ENCODE measurements at regions of chr9 and their contacts with region 1.

Region 1: DNA sequence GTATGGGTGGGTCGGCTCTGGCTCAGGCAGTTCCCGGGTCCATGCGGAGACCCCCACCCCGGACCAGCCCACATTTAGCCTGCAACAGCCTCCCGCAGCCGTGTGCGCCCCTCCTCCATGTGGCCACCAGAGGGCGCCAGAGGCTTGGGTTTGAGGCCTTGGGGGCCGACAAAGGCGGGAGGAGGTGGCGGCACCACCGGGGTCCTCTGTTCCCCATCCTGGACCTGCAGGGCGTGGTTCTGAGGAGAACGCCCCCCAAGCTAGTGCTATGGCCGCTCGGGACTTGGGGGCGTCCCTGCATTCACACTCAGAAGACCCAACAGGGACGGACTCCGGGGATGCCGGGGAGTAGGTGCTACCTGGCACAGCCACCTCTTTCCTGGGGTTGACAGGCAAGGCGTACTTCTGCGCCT is 16.5 kb downstream of the ASS1 start:
- DNase-seq: peak; percentile 52 to 82 (median 66)
- ATAC-seq: peak; percentile 55
- H3K4me3 ChIP-seq: no peak overlapping the region
- H3K4me3 Mint-ChIP-seq: no peak overlapping the region
- H3K27ac ChIP-seq: no peak overlapping the region
- H3K27ac Mint-ChIP-seq: no peak overlapping the region
- H3K4me1 ChIP-seq: peaks cover 4% of the 10 kb centered on the region
- H3K4me1 Mint-ChIP-seq: no peaks in the 10 kb centered on the region
- H3K27me3 ChIP-seq: peaks cover 22 to 25% of the 10 kb centered on the region in 2 experiments
- H3K27me3 Mint-ChIP-seq: peaks cover 33% of the 10 kb centered on the region
- CTCF ChIP-seq: peak; percentile 90

Region 2: DNA sequence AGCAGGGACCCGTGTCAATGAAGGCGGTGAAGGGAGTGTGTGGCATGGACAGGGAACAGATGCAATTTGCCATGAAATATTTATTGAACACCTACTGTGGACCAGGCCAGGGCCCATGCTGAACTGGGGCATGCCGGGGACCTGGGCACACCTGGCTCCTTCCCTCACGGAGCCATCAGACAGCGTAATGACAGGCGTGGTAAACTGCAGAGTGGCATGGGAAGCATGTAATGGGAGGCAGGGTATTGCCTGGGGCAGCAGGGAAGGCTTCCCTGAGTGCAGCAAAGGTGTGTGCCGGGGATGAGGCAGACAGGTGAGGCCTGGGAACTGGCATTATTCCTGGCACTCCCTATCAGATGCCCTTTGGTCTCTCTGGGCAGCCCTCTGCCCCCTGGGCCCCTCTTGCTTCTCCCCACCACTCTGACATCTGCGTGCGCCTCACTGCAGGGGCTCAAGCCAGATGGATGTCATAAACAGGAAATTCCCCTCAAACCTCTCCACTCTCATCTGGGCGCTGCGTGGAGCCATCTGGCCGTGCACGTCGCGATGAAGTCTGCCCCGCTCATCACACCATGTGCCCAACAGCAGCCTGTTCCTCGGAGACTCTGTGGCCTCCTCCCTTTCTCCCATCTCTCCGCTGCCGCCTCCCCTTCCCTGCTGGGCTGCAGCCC is 128.0 kb before region 1 on chr9:
- CTCF ChIA-PET with region 1: no interaction called
- POLR2A ChIA-PET with region 1: no interaction called
- intact Hi-C with region 1: no loop called
- DNase-seq: no peak
- ATAC-seq: no peak
- H3K4me3 ChIP-seq: no peak overlapping the region
- H3K4me3 Mint-ChIP-seq: no peak overlapping the region
- H3K27ac ChIP-seq: no peak overlapping the region
- H3K27ac Mint-ChIP-seq: no peak overlapping the region
- H3K4me1 ChIP-seq: no peaks in the 10 kb centered on the region
- H3K4me1 Mint-ChIP-seq: no peaks in the 10 kb centered on the region
- H3K27me3 ChIP-seq: peaks cover 7 to 32% of the 10 kb centered on the region in 2 experiments
- H3K27me3 Mint-ChIP-seq: peaks cover 48% of the 10 kb centered on the region
- CTCF ChIP-seq: no peak

Region 3: DNA sequence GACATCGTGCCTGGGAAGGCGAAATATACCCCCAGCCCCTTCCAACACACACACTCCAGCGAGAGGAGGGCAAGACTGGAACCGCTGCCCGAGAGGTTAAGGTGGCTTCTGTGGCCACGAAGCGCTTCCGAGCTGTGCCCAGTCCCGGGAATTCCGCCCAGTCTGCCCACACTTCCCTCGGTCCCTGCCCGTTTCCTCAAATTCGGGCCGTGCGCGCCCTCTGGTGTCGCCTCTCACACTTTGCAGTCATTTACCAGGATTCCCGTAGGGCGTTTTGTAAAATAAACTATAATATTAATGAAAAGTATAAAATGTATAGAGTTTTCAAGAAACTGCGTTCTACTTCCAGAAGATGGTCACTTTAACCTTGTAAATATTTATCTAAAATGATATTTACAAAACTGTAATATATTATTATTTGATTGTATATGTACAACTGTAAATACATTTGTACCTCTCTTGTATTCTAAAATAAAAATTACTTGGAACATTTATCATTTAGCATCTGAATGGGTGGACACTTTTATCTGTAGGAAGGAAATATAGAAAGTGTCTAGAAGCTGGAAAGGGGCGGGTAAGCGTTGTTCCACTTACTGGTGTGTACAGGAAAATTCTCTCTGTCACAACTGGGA is 221.4 kb after region 1 on chr9:
- CTCF ChIA-PET with region 1: interaction called, 3 read pairs
- POLR2A ChIA-PET with region 1: no interaction called
- intact Hi-C with region 1: loop called (anchors 1 kb)
- DNase-seq: peak; percentile 24 to 81 (median 52)
- ATAC-seq: peak; percentile 48
- H3K4me3 ChIP-seq: peak overlapping the region; percentile 70
- H3K4me3 Mint-ChIP-seq: peak overlapping the region; percentile 97
- H3K27ac ChIP-seq: no peak overlapping the region
- H3K27ac Mint-ChIP-seq: peak overlapping the region; percentile 24
- H3K4me1 ChIP-seq: peaks cover 17% of the 10 kb centered on the region
- H3K4me1 Mint-ChIP-seq: peaks cover 12% of the 10 kb centered on the region
- H3K27me3 ChIP-seq: peaks cover 5 to 6% of the 10 kb centered on the region in 2 experiments
- H3K27me3 Mint-ChIP-seq: peaks cover 27% of the 10 kb centered on the region
- CTCF ChIP-seq: peak; percentile 97